ENCODE measurements at regions of chr15 and their contacts with region 1.

Region 1: DNA sequence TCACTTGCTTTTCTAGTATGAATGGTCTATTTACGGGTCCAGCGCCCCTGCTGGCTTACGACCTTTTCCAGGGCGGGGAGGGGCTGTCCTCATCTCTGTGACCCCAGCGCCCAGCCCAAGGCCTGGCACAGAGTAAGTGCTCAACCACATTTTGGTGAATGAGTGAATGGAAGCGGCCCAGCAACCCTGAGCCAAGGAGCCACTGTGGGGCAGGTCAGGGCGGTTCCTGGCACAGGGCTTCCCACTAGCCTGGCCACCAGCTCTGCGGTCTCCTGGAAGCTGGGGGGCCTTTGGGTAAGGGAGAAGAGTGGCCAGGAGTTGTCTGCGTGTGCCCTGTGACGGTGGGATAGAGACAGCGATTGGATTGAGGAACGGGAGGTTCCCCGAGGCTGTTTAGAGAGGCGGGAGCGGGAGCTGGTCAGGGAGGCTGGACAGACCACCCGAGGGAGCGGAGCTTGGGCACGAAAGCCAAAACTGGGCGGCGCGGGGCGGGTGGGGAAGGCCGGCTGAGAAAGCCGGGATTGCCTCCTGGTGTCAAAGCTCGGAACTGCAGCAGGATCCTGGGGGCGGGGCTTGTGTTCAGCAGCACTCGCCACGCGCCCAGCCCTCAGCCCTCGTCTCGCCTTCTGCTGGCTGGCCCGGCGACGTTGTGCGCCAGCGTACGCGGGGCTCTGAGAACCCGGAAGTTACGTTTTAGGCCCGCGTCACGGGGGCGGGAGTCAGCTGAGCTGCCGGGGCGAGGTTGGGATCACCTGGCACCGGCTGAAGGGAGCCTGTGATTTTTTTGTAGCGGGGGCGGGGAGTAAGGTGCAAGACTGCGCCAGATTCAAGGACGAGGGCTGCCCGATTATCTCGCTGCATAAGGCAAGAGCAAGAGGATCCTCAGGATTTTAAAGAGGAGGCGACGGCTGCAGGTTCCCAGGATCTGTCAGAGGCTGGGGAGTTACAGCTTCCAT is at the start of gene VPS18:
- DNase-seq: peak; percentile 97
- ATAC-seq: peak; percentile 98
- H3K4me3 ChIP-seq: peak within 1 kb of the TSS; percentile 84
- H3K27ac ChIP-seq: peak within 1 kb of the TSS; percentile 72
- H3K4me1 ChIP-seq: peaks cover 9% of the 10 kb centered on the region; the same call in 1 of the 2 replicates
- H3K27me3 ChIP-seq: no peaks in the 10 kb centered on the region; the same call in 1 of the 2 replicates
- CTCF ChIP-seq: peak; percentile 94
- POLR2A ChIP-seq: peak; percentile 71; the same call in 1 of the 2 replicates
- RAD21 ChIP-seq: peak; percentile 88
- total RNA-seq, gene VPS18: 30.0 and 32.3 TPM in 2 replicates

Region 2: GRCh38 chr15:40523611-40524010 is 370.4 kb before region 1 on chr15:
- CTCF ChIA-PET with region 1: interaction called, 3 read pairs
- POLR2A ChIA-PET with region 1: no interaction called
- dilution Hi-C with region 1: no loop called
- in situ Hi-C with region 1: no loop called
- intact Hi-C with region 1: loop called (anchors 5 kb)
- DNase-seq: no peak
- ATAC-seq: no peak
- H3K4me3 ChIP-seq: no peak overlapping the region
- H3K27ac ChIP-seq: no peak overlapping the region
- H3K4me1 ChIP-seq: 0 out of 2 replicates have a peak, but pooled peaks cover 2% of the 10 kb centered on the region
- H3K27me3 ChIP-seq: no peaks in the 10 kb centered on the region
- CTCF ChIP-seq: no peak
- POLR2A ChIP-seq: no peak
- RAD21 ChIP-seq: no peak

Region 3: DNA sequence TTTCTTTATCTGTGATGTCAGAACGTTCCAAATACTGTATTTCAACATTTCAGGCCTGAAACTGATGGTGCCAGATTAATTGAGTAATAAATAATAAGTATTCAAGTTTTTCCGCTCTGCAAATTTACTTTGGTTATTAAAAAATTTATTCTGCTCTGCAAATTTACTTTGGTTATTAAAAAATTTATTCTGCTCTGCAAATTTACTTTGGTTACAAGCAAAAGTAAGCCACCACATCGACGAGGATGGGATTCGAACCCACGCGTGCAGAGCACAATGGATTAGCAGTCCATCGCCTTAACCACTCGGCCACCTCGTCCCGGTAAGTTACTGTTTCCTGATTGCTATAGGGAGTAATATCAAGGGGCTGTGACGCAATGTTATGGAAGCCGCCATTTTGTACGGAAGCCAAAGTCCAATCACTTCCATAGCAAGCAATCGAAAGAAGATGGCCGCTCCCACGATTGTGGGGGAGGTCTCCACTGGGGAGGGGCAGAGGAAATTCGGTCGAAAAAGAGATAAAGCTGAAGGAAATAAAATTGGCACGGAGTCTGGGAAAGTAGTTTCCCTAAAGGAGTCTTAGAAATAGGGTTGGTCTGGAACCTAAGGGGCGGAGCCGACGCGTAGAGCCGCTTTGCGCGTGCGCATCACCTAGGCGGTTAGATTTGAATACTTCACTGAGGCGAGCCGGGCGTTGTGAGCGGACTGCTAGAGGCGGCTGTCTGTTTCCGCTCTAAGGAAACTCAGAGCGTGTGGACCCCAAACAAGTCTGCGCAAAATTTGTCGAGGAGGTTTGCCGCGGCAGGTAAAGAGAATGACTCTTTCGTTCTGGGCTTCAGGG is 300.2 kb before region 1 on chr15 and contains the start of gene KNL1:
- CTCF ChIA-PET with region 1: interaction called, 7 read pairs
- POLR2A ChIA-PET with region 1: no interaction called
- dilution Hi-C with region 1: no loop called
- in situ Hi-C with region 1: no loop called
- intact Hi-C with region 1: loop called (anchors 1 kb)
- DNase-seq: peak; percentile 90
- ATAC-seq: peak; percentile 89
- H3K4me3 ChIP-seq: peak within 1 kb of the TSS; percentile 52
- H3K27ac ChIP-seq: peak within 1 kb of the TSS; percentile 83
- H3K4me1 ChIP-seq: no peaks in the 10 kb centered on the region
- H3K27me3 ChIP-seq: no peaks in the 10 kb centered on the region
- CTCF ChIP-seq: no peak
- POLR2A ChIP-seq: peak; percentile 47
- RAD21 ChIP-seq: no peak
- total RNA-seq, gene KNL1: 25.1 and 32.5 TPM in 2 replicates

Region 4: GRCh38 chr15:40684381-40684780 is 209.6 kb before region 1 on chr15:
- CTCF ChIA-PET with region 1: no interaction called
- POLR2A ChIA-PET with region 1: no interaction called
- dilution Hi-C with region 1: no loop called
- in situ Hi-C with region 1: no loop called
- intact Hi-C with region 1: loop called (anchors 5 kb)
- DNase-seq: no peak
- ATAC-seq: no peak
- H3K4me3 ChIP-seq: no peak overlapping the region
- H3K27ac ChIP-seq: no peak overlapping the region
- H3K4me1 ChIP-seq: no peaks in the 10 kb centered on the region
- H3K27me3 ChIP-seq: no peaks in the 10 kb centered on the region
- CTCF ChIP-seq: no peak
- POLR2A ChIP-seq: no peak
- RAD21 ChIP-seq: no peak

Region 5: DNA sequence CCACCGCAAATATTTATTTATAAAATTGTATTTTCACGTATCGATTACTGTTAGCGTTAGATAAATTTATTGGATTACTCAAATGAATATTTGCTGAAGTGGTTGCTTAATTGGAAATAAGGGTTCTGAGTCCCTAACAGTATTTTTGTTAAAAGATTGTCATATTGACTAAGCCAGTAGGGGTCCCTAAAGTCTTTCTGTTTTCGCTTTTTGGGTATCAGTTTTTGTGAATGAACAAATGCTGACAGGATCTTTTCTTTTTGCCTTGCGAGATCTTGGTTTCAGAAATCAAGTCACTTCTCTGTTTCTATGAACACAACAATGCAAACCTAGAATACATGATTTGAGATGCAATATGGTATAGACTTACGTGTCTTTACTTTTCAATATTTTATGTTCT is 191.9 kb before region 1 on chr15:
- CTCF ChIA-PET with region 1: interaction called, 8 read pairs
- POLR2A ChIA-PET with region 1: no interaction called
- dilution Hi-C with region 1: no loop called
- in situ Hi-C with region 1: no loop called
- intact Hi-C with region 1: loop called (anchors 1 kb)
- DNase-seq: peak; percentile 28
- ATAC-seq: no peak
- H3K4me3 ChIP-seq: no peak overlapping the region
- H3K27ac ChIP-seq: no peak overlapping the region
- H3K4me1 ChIP-seq: no peaks in the 10 kb centered on the region
- H3K27me3 ChIP-seq: no peaks in the 10 kb centered on the region
- CTCF ChIP-seq: peak; percentile 34
- POLR2A ChIP-seq: no peak
- RAD21 ChIP-seq: peak; percentile 46

Region 6: DNA sequence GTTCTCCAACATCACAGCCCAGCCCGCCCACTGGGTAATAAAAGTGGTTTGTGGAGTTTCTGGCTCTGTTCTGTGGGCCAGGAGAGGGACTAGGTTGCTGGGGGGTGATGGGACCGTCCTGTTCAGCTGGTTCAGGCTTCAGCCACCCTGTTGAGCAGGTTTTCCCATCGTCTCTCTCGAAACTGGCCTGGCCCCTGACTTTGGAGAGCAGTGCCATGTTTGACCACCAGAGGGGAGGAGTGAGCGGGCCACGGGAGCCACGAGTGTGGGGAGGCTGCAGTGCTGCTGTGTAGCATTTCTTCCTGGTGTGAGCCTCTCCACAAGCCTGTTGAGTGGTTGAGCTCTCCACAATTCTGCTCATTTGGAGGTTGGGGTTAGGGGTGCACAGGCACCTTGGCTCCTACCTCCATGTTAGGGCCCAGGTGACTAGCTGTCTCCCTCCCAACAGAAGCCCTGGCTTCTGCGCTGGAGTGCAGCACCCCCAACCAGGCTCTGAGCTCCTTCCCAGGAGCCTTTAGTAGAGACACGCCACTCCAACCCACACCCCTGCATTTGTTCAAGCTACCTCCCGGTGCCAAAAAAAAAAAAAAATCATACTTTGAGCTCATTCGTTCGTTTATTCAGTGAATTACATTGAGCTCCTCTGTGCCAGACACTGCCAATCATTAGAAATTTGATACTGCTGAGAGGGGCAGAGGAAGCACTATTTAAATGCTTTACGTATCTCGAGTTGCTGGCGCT is 36.2 kb before region 1 on chr15:
- CTCF ChIA-PET with region 1: interaction called, 44 read pairs
- POLR2A ChIA-PET with region 1: interaction called, 3 read pairs
- dilution Hi-C with region 1: no loop called
- in situ Hi-C with region 1: loop called (anchors 5 kb)
- intact Hi-C with region 1: loop called (anchors 1 kb)
- DNase-seq: peak; percentile 48
- ATAC-seq: peak; percentile 99
- H3K4me3 ChIP-seq: no peak overlapping the region
- H3K27ac ChIP-seq: no peak overlapping the region
- H3K4me1 ChIP-seq: no peaks in the 10 kb centered on the region
- H3K27me3 ChIP-seq: peaks cover 7% of the 10 kb centered on the region
- CTCF ChIP-seq: peak; percentile 91
- POLR2A ChIP-seq: no peak
- RAD21 ChIP-seq: peak; percentile 77

Region 7: GRCh38 chr15:41304149-41304770 is 410.2 kb after region 1 on chr15:
- CTCF ChIA-PET with region 1: no interaction called
- POLR2A ChIA-PET with region 1: no interaction called
- dilution Hi-C with region 1: no loop called
- in situ Hi-C with region 1: no loop called
- intact Hi-C with region 1: no loop called
- DNase-seq: no peak
- ATAC-seq: no peak
- H3K4me3 ChIP-seq: no peak overlapping the region
- H3K27ac ChIP-seq: no peak overlapping the region
- H3K4me1 ChIP-seq: no peaks in the 10 kb centered on the region
- H3K27me3 ChIP-seq: no peaks in the 10 kb centered on the region
- CTCF ChIP-seq: no peak
- POLR2A ChIP-seq: no peak
- RAD21 ChIP-seq: no peak

Measured in IMR-90 (cell line).